RWPE1 (cell line): ENCODE measurements at regions of chr1 and their contacts with region 1.

Region 1: DNA sequence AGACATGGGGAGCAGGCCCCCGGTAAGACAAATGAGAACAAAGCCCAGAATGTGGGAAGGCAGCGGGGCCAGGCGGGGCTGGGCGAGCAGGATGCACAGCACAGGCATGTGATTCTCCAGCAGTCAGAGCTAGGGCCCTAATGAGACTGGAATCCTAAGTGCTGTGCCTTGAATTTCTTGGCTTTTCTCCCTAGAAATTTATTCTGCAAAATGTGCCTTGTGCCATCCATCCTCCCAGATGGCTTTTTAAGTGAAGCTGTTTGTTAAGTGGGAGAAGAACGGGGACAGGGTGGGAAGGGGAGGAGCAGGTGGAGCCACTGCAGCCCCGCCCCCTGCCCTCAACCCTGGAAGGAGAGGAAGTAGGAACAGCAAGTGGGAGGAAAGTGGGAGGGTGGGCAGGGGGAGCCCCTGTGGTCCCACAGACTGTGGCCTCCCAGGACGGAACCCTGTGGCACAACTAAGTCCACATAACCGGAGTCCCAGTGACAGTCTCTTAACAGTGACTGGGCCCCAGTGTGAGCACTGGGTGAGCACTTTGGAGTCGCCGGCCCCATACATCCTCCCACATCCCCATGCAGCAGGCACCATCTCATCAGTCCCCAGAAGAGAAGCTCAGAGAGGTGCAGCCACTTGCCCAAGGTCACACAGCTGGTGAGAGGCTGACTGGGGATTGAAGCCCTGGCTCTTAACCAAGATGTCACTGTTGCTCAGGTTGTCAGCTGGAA is 216.9 kb downstream of the MATN1 start:
- DNase-seq: no peak
- H3K27ac ChIP-seq: no peak overlapping the region
- CTCF ChIP-seq: no peak

Region 2: GRCh38 chr1:28807986-28808385 is 1698.5 kb before region 1 on chr1:
- CTCF ChIA-PET with region 1: no interaction called
- POLR2A ChIA-PET with region 1: interaction called, 10 read pairs
- DNase-seq: no peak
- H3K27ac ChIP-seq: no peak overlapping the region
- CTCF ChIP-seq: no peak

Region 3: DNA sequence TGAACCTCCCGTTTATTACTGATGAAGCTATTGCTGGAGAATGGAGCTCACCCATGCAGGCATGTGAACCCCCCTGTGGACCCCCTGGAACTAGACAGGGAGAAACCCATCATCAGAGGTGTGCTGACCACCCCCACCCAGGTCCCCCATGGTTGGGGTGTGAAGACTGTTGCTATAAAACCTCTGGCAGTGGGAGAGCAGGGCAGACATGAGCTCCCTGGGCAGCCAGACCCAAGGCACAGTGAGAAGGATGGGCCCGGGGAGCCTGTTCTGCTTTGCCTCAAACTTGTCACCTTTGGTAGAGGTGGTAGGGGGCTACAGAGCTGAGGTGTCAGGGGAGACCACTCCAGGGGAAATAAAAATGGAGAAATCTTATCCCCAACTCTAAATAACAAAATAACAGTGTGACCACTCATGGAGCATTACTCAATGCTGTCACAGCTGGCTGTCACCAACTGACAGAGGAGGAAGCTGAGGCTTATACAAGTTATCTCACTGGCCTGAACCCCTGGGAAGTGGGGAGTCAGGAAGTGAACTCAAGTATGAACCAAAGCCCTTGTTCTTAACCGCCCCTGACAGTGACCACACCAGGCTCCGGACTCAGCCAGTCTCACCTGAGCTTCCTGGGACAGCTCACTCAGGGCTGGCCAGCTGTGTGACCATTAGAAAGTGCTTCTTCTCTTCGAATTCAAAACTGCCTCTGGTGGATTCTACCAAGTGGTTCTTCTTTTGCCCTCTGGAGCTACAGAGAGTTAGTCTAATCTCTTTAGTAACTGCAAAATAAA is 481.9 kb before region 1 on chr1:
- CTCF ChIA-PET with region 1: no interaction called
- POLR2A ChIA-PET with region 1: no interaction called
- DNase-seq: no peak
- H3K27ac ChIP-seq: no peak overlapping the region
- CTCF ChIP-seq: no peak